ENCODE measurements at regions of chr12 and their contacts with region 1.

Region 1: DNA sequence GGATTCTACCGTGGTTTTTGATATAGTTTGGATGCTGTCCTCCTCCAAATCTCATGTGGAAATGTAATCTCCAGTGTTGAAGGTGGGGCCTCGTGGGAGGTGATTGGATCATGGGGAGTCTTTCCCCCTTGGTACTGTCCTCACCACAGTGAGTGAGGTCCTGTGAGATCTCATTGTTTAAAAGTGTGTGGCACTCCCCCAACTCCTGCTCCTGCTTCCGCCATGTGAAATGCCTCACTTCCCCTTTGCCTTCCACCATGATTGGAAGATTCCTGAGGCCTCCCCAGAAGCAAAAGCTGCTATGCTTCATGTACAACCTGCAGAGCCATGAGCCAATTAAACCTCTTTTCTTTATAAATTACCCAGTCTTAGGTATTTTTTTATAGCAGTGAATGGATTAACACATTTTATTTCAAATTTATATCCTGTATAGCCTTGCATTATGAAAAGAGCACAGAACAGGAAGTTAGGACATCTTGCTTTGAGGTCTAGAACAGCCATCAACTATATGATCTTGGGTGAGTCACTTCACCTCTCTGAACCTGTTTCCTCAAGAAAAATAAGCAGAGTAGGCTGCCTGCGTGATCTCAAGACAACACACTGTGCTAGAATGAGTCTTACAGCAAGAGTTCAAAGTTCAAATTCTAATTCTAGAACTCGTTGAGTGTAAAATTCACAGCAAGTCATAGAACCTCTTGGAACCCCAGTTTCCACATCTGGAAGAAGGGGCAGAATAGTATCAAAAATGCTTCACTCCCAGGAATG is 160.9 kb upstream of the EEA1 start:
- DNase-seq: peak; percentile 81
- ATAC-seq: peak; percentile 79
- H3K4me3 ChIP-seq: no peak overlapping the region
- H3K27ac ChIP-seq: peak overlapping the region; percentile 89
- H3K4me1 ChIP-seq: peaks cover 53% of the 10 kb centered on the region
- H3K27me3 ChIP-seq: no peaks in the 10 kb centered on the region
- CTCF ChIP-seq: no peak

Region 2: DNA sequence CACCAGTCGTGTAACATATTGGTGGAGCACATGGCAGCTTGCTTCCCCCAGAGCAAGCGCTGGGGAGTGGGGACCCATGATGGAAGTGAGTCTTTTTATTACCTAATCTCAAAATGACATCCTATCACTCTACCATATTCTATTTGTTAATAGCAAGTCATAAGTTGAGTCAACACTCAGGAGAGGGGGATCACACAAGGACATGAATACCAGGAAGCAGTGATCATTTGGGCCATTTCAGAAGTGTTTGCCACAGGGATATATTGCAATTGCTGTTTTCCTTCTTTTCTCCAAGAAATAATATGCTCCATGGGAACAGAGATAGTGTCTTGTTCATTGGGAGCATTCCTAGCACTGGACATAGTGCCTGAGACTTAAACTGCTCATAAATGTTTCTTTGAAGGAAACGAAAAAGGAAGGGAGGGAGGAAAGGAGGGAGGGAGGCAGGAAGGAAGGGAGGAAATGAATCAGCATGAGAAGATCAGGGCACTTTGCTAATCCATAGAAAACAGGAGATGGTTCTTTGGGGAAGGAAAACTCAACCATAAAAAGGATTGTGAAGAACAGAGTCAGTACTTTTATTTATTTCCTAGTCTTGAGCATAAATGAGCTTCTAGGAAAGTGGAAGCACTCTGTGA is 121.7 kb before region 1 on chr12:
- CTCF ChIA-PET with region 1: no interaction called
- POLR2A ChIA-PET with region 1: no interaction called
- intact Hi-C with region 1: no loop called
- DNase-seq: peak; percentile 64
- ATAC-seq: peak; percentile 58
- H3K4me3 ChIP-seq: no peak overlapping the region
- H3K27ac ChIP-seq: peak overlapping the region; percentile 58
- H3K4me1 ChIP-seq: peaks cover 37% of the 10 kb centered on the region
- H3K27me3 ChIP-seq: no peaks in the 10 kb centered on the region
- CTCF ChIP-seq: no peak

Region 3: DNA sequence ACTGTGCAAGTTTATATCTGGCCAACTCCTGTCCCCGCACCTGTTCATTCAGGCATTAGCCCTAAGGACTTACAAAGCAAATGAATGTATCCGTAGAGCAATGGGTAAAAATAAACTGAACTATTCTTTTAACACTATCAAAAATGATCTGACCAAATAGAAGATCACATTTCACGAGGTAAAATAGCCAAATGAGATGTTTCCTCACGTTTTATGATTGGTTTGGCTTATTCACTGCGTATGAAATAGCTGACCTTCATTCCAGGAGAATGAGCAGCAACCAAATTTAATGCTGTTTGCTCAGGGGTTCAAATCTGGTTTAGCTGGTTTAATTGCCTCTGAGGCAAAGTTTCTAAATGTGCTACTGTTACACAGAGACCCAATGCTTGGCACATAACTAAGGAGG is 55.1 kb after region 1 on chr12:
- CTCF ChIA-PET with region 1: no interaction called
- POLR2A ChIA-PET with region 1: interaction called, 3 read pairs
- intact Hi-C with region 1: loop called (anchors 2 kb)
- DNase-seq: peak; percentile 96
- ATAC-seq: peak; percentile 86
- H3K4me3 ChIP-seq: peak overlapping the region; percentile 17; the same call in 1 of the 2 replicates
- H3K27ac ChIP-seq: peak overlapping the region; percentile 55
- H3K4me1 ChIP-seq: peaks cover 27% of the 10 kb centered on the region
- H3K27me3 ChIP-seq: no peaks in the 10 kb centered on the region
- CTCF ChIP-seq: no peak

Region 4: DNA sequence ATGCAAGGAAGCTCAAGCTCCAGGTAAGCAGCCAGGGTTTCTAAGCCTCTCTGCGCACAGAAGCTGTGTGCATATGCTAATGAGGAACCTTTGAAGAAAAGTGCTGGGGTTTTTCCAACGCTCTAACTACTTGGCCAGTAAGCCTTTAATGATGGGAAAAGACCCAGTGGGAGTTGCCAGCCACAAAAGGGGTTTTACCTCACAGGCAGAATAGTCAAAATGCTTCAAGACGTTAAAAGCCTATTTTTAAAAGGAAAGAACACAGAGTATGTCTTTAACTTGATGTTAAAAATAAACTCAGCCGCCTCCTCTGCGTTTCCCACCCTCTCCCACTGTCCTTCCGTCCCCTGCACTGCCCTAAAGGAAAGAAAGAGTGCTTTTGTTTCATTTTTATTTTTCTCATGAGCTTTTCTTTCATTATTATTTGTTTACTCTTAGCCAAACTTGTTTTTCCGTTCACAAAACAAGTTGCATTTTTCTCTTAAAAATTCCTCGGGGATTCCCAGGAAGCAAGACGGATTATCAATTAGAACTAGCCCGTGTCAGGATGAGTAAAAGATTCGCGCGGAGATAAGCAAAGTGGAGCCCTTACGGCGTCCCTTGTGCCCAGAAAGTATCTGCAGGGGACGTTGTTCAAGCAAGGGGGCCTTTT is 78.0 kb after region 1 on chr12:
- CTCF ChIA-PET with region 1: no interaction called
- POLR2A ChIA-PET with region 1: no interaction called
- intact Hi-C with region 1: loop called (anchors 1 kb)
- DNase-seq: peak; percentile 43
- ATAC-seq: peak; percentile 38
- H3K4me3 ChIP-seq: peak overlapping the region; percentile 84
- H3K27ac ChIP-seq: no peak overlapping the region
- H3K4me1 ChIP-seq: peaks cover 23% of the 10 kb centered on the region
- H3K27me3 ChIP-seq: no peaks in the 10 kb centered on the region
- CTCF ChIP-seq: no peak

Measured in PC-3 (cell line).